ENCODE measurements at regions of chr3 and their contacts with region 1.

Region 1: GRCh38 chr3:69558912-69559311 is 173.0 kb upstream of the FRMD4B start:
- DNase-seq: no peak
- ATAC-seq: peak; percentile 92

Region 2: DNA sequence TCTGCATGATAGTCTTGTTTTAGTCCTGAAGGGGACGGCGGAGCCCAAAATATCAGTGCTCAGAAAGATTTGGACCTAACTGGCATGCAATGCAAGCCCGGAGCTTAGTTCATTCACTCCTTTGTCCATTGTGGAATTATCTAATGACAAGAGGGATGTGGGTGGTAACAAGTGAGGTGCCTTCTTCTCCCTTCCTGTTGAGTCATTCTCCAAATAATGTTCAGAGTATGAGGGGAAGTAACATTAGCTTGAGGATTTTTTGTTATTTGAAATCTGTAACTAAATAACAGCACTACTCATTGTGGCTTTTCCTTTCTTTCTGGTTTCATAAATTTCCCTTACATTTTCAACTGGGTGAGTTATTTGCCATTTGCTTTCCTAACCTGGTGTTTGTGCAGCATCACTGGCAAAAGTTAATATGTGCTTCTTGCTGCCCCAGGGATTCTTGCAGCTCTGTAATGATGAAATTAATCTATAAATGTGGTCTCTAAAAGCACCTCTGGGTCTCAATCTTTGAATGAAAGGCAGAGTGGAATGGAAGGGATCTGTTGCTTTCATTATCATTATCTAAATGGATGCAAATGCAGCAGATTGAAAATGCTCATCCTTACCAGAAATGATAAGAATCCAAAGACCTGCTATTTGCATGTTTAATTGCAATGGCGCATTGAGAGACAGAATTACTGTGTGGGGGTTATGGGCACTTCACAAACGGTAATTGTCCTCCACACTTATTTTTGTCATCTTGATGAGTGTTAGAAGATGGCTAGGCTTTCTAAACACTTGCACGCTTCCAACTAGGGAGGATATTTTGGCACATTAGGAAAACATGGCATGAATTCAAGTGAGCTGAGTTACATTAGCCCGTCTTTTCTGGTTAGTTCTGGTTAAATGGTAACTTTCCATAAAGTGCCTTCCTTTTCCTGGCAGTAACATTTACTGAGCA is 90.5 kb after region 1 on chr3:
- intact Hi-C with region 1: loop called (anchors 10 kb)
- DNase-seq: no peak
- ATAC-seq: peak; percentile 84